Activated CD8-positive, alpha-beta T cell treated with anti-CD3 and anti-CD28 coated beads for 36 hours (primary cell): ENCODE measurements at regions of chr10 and their contacts with region 1.

Region 1: GRCh38 chr10:110137142-110137545 is 70.3 kb upstream of the MXI1 start:
- DNase-seq: no peak
- ATAC-seq: peak; percentile 86
- H3K4me3 Mint-ChIP-seq: no peak overlapping the region
- H3K27ac Mint-ChIP-seq: peak overlapping the region; percentile 15
- H3K4me1 Mint-ChIP-seq: peaks cover 34% of the 10 kb centered on the region
- H3K27me3 Mint-ChIP-seq: no peaks in the 10 kb centered on the region
- CTCF ChIP-seq: peak; percentile 98

Region 2: DNA sequence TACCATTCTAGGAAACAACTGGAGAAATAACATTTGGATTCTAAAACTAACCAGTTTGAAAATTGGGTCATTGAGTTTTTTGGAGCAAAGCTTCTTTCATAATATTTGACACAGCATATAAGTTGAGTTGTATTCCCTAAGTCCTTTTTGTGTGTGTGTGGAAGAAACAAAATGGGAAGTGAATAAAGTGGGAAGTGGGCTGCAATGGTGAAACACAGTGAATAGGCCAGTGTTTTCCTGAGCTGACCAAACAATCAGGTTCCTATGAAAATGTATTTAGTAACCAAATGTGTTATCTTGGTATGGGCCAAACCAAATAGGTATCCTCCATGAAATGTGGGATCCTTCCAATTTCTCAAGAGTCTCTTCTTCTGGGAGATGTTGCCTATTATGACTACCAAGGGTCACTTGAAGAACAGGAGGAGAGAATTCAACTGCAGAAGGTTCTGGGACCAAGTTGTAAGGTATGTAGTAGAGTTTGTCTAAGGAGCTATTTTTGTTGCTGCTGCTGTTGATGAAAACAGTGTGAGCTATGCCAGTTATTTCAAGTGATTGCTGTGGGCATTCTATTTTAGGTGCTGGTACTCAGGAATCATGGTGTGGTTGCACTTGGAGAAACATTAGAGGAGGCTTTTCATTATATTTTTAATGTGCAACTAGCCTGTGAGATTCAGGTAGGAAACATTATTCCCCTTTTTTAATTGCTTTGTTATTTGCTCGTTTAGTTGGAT is 18.1 kb before region 1 on chr10:
- CTCF ChIA-PET with region 1: interaction called, 11 read pairs
- POLR2A ChIA-PET with region 1: interaction called, 3 read pairs
- intact Hi-C with region 1: no loop called
- DNase-seq: no peak
- ATAC-seq: no peak
- H3K4me3 Mint-ChIP-seq: no peak overlapping the region
- H3K27ac Mint-ChIP-seq: peak overlapping the region; percentile 29
- H3K4me1 Mint-ChIP-seq: peaks cover 5% of the 10 kb centered on the region
- H3K27me3 Mint-ChIP-seq: no peaks in the 10 kb centered on the region
- CTCF ChIP-seq: no peak

Region 3: DNA sequence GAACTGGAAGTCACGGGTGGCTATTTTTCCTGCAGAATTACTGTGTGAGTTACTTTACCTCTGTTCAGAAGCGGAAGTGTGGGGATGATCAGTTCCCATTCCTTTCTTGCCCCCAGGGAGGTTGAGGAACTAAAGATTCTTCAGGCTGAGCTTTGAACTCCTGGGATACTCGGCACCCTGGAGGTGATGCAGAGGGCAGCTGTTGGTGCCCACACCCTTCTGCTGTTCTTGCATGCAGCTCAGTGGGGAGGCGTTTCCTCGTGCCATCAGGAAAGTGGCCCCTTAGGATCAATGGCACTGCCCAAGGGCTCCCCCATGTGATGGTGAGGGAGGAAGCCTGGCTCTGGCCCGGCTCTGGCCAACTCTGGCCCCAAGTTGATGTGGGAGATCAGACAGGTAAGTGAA is 25.6 kb after region 1 on chr10:
- CTCF ChIA-PET with region 1: interaction called, 20 read pairs
- POLR2A ChIA-PET with region 1: no interaction called
- intact Hi-C with region 1: no loop called
- DNase-seq: no peak
- ATAC-seq: no peak
- H3K4me3 Mint-ChIP-seq: no peak overlapping the region
- H3K27ac Mint-ChIP-seq: no peak overlapping the region
- H3K4me1 Mint-ChIP-seq: peaks cover 13% of the 10 kb centered on the region
- H3K27me3 Mint-ChIP-seq: peaks cover 79% of the 10 kb centered on the region
- CTCF ChIP-seq: no peak

Region 4: DNA sequence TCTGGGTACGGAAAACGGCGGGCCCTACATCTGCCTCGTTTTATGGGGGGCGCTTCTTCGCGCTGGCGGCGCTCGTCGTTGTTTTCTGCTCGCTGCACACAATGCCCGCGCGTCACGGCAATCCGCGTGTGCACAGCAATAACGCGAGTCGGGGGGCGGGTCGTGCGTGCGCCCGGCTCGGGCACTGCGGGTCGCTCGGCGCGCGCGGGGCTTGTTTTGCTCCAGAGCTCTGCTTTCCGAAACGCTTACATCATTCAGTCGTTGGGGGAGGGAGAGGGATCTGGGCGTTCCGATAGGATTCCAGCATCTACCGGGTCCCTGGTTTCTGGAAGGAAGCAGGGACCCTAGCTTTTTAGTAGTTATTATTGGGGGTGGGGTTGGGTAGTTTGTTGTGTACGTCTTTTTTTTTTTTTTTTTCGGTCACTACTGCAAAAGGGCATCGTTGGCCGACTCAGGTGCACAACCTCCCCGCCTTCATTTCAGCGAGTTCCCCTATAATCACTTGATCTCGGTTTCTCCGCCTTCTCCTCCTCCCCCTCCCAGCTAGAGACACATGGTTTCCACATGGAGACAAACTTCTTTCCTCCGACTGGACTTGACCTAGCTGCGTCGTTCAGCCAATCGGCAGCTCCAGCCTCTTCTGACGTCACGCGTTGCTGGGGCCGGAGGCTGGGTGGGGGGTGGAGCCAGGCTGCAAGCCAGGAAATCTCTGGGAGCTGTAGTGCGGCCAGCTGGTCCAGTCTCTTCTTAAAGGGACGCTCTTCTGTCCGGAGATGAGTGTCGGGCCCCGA is 73.7 kb after region 1 on chr10:
- CTCF ChIA-PET with region 1: interaction called, 14 read pairs
- POLR2A ChIA-PET with region 1: no interaction called
- intact Hi-C with region 1: loop called (anchors 5 kb)
- DNase-seq: peak; percentile 95
- ATAC-seq: peak; percentile 71
- H3K4me3 Mint-ChIP-seq: peak overlapping the region; percentile 97
- H3K27ac Mint-ChIP-seq: peak overlapping the region; percentile 96
- H3K4me1 Mint-ChIP-seq: peaks cover 49% of the 10 kb centered on the region
- H3K27me3 Mint-ChIP-seq: peaks cover 15% of the 10 kb centered on the region
- CTCF ChIP-seq: no peak

Region 5: DNA sequence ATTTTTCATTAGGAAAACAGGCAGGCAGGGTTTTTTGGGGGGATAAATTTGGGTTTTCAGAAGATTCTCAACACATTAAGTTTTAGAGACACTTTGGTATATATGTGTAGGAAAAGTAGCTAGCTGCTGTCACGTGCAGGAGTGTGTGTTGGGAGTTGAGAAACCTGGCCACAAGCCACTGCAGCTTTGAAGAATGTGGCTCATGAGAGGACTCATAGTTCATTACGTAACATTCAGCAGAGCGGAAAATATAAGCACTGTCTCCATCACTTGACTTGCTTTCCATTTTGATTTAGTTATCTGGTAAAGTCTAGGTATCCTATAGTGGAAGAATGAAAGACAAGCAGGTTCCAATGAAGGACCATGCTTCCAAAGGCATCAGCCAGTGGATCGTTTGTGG is 136.3 kb after region 1 on chr10:
- CTCF ChIA-PET with region 1: interaction called, 51 read pairs
- POLR2A ChIA-PET with region 1: no interaction called
- intact Hi-C with region 1: no loop called
- DNase-seq: peak; percentile 69
- ATAC-seq: peak; percentile 50
- H3K4me3 Mint-ChIP-seq: no peak overlapping the region
- H3K27ac Mint-ChIP-seq: peak overlapping the region; percentile 66
- H3K4me1 Mint-ChIP-seq: peaks cover 36% of the 10 kb centered on the region
- H3K27me3 Mint-ChIP-seq: no peaks in the 10 kb centered on the region
- CTCF ChIP-seq: no peak

Region 6: GRCh38 chr10:110286841-110287240 is 149.7 kb after region 1 on chr10:
- CTCF ChIA-PET with region 1: interaction called, 10 read pairs
- POLR2A ChIA-PET with region 1: no interaction called
- intact Hi-C with region 1: no loop called
- DNase-seq: no peak
- ATAC-seq: no peak
- H3K4me3 Mint-ChIP-seq: no peak overlapping the region
- H3K27ac Mint-ChIP-seq: no peak overlapping the region
- H3K4me1 Mint-ChIP-seq: no peaks in the 10 kb centered on the region
- H3K27me3 Mint-ChIP-seq: no peaks in the 10 kb centered on the region
- CTCF ChIP-seq: no peak